ENCODE measurements at regions of chr17 and their contacts with region 1.

Region 1: DNA sequence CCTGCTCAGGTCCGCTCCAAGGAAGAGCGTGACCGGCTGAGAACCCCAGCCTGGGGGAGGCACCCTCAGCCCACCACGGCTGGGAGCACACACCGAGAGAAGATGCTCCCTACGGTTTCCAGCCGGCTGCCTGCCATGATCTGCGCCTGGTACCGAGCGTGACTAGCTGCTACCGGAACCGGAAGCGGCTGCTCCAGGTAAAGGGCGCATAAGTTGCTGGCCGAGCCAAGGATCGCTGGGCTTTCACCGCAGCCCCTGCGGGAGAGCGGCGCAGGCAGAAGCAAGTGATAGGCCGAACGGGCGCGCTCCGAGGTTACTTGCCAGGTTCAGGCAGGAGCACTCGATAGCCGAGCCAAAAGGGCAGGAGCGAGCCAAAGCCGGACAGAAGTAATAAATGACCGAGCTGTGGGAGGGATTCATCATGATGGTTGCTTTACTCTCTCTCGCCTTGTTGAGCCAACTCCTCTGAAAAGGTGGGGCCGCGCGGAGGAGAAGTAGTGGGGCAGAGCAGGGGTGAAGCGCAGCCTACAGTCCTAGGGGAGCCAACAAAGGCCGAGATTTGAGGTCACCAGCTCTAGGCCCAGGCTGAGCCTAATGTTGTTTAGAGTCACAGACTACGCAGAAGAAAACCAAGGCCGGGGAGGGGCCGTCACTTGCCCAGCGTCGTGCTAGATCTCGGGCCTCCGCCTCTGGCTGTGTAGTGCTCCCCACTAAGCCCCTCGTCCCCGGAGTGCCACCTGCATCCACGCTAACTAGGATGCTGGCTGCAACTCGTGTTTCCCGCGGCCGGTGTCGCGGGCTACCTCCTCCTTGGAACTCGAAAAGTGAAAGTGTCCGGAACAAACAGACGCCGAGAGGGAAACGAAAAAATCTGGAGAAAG is at the start of gene MRPS23:
- DNase-seq: peak; percentile 98
- H3K4me3 Mint-ChIP-seq: peak within 1 kb of the TSS; percentile 91
- H3K27ac Mint-ChIP-seq: peak within 1 kb of the TSS; percentile 95
- H3K4me1 Mint-ChIP-seq: peaks cover 28% of the 10 kb centered on the region
- H3K27me3 Mint-ChIP-seq: no peaks in the 10 kb centered on the region
- total RNA-seq, gene MRPS23: 57.5 to 59.1 TPM

Region 2: GRCh38 chr17:56499799-56500388 is 1350.2 kb before region 1 on chr17:
- CTCF ChIA-PET with region 1: no interaction called
- intact Hi-C with region 1: no loop called
- DNase-seq: peak; percentile 64
- H3K4me3 Mint-ChIP-seq: no peak overlapping the region
- H3K27ac Mint-ChIP-seq: no peak overlapping the region
- H3K4me1 Mint-ChIP-seq: no peaks in the 10 kb centered on the region
- H3K27me3 Mint-ChIP-seq: no peaks in the 10 kb centered on the region

Region 3: DNA sequence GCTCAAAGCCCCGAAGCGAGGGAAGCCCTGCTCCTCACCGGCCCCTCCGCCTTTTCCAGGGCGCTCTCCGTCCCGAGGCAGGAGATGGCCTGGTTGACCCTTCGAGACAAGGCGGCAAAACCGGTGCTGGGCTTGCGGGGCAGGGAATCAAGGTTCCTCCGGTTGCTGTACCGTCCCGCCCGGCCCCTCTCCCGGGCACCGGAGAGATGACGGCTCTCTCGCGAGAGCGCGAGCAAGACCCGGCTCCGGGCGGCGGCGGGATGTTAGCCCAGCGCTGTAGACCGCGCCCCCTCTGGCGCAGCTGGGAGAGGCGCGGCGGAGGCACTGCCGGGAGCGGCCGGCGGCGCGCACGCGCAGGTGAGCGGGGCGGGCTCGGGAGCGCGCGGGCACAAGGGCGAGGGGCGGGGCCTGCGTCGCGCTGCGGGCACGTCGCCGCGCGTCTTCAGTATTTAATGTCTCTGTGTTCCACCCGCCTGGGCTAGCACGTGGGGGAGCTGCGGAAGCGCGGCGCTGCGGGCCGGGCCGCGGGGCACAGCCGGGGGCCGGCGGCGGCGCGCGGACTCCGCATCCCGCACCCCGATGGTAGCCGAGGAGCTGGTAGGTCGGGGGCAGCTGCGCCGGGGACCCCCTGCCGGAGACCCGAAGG is 765.2 kb before region 1 on chr17 and contains the start of gene AKAP1:
- CTCF ChIA-PET with region 1: no interaction called
- intact Hi-C with region 1: loop called (anchors 1 kb)
- DNase-seq: peak; percentile 95
- H3K4me3 Mint-ChIP-seq: peak within 1 kb of the TSS; percentile 83
- H3K27ac Mint-ChIP-seq: peak within 1 kb of the TSS; percentile 81
- H3K4me1 Mint-ChIP-seq: peaks cover 43% of the 10 kb centered on the region
- H3K27me3 Mint-ChIP-seq: no peaks in the 10 kb centered on the region
- total RNA-seq, gene AKAP1: 17.6 to 23.1 TPM

Region 4: DNA sequence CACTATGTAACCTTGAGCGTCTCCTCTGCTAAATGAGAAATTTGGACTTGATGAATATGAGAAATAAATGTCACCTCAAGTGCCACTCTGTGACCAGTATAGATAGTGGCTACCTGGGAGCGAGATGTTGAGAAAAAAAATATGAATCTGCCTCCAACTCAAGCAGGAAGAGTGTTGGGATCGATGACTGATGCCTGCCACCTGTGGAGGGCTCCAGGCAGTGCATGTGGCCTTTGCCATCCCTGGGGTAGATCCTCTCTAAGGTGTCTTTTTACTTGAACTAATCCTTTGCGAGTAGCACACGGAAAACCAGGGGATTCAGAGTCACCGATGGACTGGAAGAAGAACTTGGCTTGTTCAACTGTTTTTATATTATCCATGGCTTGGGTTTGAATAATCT is 114.4 kb before region 1 on chr17:
- CTCF ChIA-PET with region 1: no interaction called
- intact Hi-C with region 1: no loop called
- DNase-seq: peak; percentile 34
- H3K4me3 Mint-ChIP-seq: no peak overlapping the region
- H3K27ac Mint-ChIP-seq: no peak overlapping the region
- H3K4me1 Mint-ChIP-seq: no peaks in the 10 kb centered on the region
- H3K27me3 Mint-ChIP-seq: peaks cover 4% of the 10 kb centered on the region

Region 5: GRCh38 chr17:57861000-57861789 is 11.1 kb after region 1 on chr17:
- CTCF ChIA-PET with region 1: interaction called, 35 read pairs
- intact Hi-C with region 1: no loop called
- DNase-seq: peak; percentile 51
- H3K4me3 Mint-ChIP-seq: peak overlapping the region; percentile 65
- H3K27ac Mint-ChIP-seq: no peak overlapping the region
- H3K4me1 Mint-ChIP-seq: peaks cover 8% of the 10 kb centered on the region
- H3K27me3 Mint-ChIP-seq: peaks cover 7% of the 10 kb centered on the region

Region 6: DNA sequence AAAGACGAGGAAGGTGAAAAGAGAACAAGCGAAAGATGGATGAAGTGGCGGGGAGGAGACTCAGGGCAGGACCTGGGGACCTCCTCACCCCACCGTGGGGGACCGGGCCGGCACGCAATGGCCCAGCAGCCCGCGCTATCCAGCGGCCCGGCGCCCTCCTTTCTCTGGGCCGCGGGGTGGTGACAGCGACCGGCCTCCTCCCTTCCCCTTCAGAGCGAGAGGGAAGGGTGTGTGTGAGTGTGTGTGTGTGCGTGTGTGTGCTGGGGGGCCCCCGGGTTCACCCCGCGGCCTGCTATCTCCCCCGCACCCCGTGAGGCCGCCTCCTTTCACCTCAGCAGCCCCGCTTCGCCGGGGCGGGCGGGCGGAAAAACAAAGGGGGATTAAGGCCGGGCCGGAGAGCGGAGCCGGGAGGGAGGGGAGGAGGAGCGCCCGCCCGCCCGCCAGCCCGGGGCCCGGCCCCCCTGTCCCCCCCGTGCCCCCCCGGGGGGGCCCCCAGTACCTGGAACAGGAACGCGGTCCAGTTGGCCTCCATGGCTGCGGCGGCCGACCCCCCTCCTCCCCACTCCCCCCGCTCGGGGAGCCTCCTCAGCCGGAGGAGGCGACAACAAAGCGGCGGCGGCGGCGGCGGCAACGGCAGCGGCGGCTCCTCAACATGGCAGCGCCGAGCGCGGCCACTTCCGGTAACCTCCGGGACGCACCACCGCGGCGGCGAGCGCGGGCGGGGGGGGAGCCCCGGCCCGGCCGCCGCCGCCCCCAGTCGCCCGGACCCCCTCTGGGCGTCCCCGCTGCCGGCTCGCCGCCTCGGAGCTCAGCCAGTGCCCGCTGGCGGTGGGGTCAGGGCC is 137.7 kb after region 1 on chr17 and contains the start of gene VEZF1:
- CTCF ChIA-PET with region 1: interaction called, 4 read pairs
- intact Hi-C with region 1: loop called (anchors 1 kb)
- DNase-seq: peak; percentile 75
- H3K4me3 Mint-ChIP-seq: peak within 1 kb of the TSS; percentile 90
- H3K27ac Mint-ChIP-seq: peak within 1 kb of the TSS; percentile 89
- H3K4me1 Mint-ChIP-seq: peaks cover 57% of the 10 kb centered on the region
- H3K27me3 Mint-ChIP-seq: no peaks in the 10 kb centered on the region
- total RNA-seq, gene VEZF1: 21.7 to 22.0 TPM

Region 7: DNA sequence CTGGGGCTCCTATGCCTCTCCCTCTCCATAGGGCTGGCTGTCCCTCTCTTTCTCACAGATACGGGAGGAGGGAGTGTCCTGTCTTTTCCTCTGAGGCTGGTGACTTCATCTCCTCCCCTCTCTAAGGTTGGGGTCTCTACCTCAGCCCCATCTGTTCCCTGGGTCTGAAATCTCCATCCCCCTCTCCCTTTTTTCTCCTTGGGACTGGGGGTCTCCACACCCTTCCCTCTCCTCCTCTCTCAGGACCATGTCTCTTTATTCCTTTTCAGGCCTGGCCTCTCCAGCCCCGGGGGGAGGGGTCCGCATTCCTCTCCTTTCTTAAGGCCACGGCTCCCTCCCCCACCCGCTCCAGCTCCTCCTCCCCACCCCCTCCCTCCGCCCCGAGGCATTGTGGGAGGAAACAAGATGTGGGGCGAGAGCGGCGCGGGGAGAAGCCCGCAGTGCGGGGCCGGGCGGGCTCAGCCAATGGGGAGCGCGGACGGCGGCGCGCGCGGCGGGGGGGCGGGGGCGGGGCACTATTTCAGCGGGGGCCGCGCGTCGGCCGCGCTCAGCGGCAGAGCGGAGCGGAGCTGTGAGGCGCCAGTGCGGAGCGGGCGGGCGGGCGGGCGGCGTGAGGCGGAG is 232.9 kb after region 1 on chr17 and contains the start of gene DYNLL2:
- CTCF ChIA-PET with region 1: no interaction called
- intact Hi-C with region 1: loop called (anchors 1 kb)
- DNase-seq: peak; percentile 94
- H3K4me3 Mint-ChIP-seq: peak within 1 kb of the TSS; percentile 77
- H3K27ac Mint-ChIP-seq: peak within 1 kb of the TSS; percentile 80
- H3K4me1 Mint-ChIP-seq: peaks cover 36% of the 10 kb centered on the region
- H3K27me3 Mint-ChIP-seq: no peaks in the 10 kb centered on the region
- total RNA-seq, gene DYNLL2: 19.1 to 19.4 TPM